GM13977 (cell line): ENCODE measurements at regions of chr3 and their contacts with region 1.

Region 1: GRCh38 chr3:151146071-151146730 is 56.8 kb downstream of the GPR171 start:
- DNase-seq: peak; percentile 52
- CTCF ChIP-seq: peak; percentile 82

Region 2: DNA sequence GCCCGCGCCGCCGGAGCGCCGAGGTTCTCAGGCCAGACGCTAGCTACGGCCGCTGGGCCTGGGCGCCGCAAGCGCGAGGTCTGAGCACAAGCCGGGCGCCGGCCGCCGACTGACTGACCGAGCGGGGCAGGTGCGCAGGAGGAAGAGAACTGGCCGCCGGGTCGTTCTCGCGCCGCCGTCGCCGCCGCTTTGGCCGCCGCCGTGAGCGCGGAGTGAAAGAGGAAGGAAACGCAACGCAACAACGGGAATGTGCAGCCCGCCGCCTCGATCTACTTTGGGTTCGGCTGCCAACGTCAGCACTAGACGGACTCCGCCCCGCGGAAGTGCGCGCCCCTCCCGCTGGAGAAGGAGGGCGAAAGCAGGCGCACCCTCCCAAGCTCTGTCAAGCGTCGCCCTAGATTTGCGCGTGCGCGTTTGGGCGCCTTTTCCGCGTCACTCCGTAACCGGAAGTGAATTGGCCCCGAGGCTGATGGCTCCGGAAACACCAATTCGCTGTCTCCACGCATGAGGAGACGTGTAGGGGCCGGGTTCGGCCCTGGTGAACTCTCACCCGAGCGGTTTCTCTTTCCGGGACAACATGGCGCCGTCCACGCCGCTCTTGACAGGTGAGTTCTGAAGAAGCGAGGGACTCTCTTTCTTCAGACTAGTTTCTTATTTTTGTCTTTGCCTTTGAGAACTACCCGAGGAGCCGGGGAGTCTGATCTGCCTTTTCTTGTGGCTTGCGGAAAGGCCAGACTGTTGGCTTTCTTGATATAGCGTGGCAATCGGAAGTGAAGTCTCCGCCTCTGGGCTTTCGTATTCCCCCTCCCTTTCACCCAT is 599.8 kb before region 1 on chr3 and contains the starts of genes EIF2A and SERP1:
- in situ Hi-C with region 1: loop called (anchors 25 kb)
- DNase-seq: peak; percentile 95
- CTCF ChIP-seq: no peak

Region 3: GRCh38 chr3:151675858-151676615 is 529.8 kb after region 1 on chr3:
- in situ Hi-C with region 1: no loop called
- DNase-seq: no peak
- CTCF ChIP-seq: no peak